CD14-positive monocyte (primary cell): ENCODE measurements at regions of chr16 and their contacts with region 1.

Region 1: DNA sequence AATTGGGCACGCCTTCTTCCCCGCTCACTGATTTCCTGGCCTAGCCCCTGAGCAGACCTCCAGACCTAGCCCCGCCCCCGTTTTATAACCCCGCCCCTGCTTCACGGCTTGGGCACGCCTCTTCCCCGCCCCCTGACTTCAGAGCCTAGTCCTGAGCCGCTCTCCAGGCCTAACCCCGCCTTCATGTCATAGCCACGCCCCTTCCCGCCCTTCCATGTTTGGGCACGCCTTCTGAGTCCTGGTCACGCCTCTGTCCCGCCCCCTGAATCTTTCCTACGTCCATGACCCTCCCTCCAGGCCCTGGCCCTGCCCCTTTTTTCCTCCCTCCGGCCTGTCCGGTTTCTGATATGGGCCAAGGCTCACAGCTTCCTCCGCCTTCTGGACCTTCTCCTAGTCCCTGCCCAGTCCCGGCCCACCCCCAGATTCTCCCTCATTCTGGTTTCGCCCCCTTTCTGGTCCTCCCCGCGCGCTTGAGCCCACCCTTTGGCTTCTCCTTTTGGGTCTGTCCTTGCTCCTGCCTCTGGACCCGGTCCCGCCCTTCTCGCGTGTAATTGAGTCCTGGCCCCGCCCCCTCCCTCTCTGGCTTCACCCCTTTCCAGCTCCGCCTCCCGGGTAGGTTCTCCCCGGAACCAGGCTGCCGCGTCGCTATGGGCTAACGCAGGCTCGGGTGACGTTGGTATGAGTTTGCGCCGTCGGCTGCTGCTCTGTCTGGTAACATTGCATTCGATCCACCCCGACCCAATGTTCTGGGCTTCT is 15.1 kb upstream of the EEF2K start:
- DNase-seq: peak; percentile 98 to 100 (median 100)
- H3K4me3 ChIP-seq: peak overlapping the region; percentile 45 to 82 (median 55)
- H3K4me3 Mint-ChIP-seq: peak overlapping the region; percentile 88 to 95
- H3K27ac ChIP-seq: peak overlapping the region; percentile 91 to 94
- H3K27ac Mint-ChIP-seq: peak overlapping the region; percentile 98 to 100 (median 100)
- H3K4me1 ChIP-seq: peaks cover 42 to 46% of the 10 kb centered on the region in 2 donors
- H3K4me1 Mint-ChIP-seq: peaks cover 40% of the 10 kb centered on the region
- H3K27me3 ChIP-seq: no peaks in the 10 kb centered on the region
- H3K27me3 Mint-ChIP-seq: peaks cover 6 to 10% (median 9%) of the 10 kb centered on the region in 3 donors
- CTCF ChIP-seq: no peak

Region 2: DNA sequence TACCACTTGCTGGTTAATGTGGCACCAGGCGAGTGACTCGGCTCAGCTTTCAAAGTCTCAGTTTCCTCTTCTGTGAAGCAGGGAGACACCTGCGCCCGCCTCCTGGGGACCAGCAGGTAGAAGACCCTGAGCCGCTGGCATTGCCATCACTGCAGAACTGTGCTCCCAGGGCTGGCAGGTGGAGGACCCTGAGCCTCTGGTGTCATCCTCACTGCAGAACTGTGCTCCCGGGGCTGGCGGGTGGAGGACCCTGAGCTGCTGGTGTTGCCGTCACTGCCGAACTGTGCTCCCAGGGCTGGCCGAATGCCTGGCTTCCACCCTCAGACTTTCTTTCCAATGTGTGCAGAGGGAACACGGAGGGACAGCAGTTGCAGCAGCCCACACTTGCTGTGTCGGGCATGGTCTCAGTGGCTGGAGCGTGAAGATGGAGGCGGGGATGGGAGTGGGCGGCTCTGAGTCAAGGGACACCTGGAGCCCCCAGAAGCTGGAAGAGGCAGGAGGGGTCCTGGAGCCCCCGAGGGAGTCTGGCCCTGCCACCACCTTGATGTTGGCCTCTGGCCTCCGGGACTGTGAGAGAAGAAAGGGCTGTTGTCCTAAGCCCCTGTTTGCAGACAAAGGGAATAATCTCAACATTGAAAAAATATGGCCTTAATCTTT is 667.4 kb before region 1 on chr16:
- intact Hi-C with region 1: loop called in 1 of 2 experiments (anchors 5 kb)
- DNase-seq: no peak
- H3K4me3 ChIP-seq: no peak overlapping the region
- H3K4me3 Mint-ChIP-seq: no peak overlapping the region
- H3K27ac ChIP-seq: no peak overlapping the region
- H3K27ac Mint-ChIP-seq: peak overlapping the region in 1 of 7 donors; percentile 15
- H3K4me1 ChIP-seq: peaks cover 16 to 17% of the 10 kb centered on the region in 2 donors
- H3K4me1 Mint-ChIP-seq: peaks cover 3% of the 10 kb centered on the region
- H3K27me3 ChIP-seq: no peaks in the 10 kb centered on the region
- H3K27me3 Mint-ChIP-seq: peaks cover 0 to 2% (median 0%) of the 10 kb centered on the region in 3 donors
- CTCF ChIP-seq: no peak

Region 3: GRCh38 chr16:21599233-21600030 is 591.5 kb before region 1 on chr16 and contains the start of gene METTL9:
- intact Hi-C with region 1: loop called in 1 of 2 experiments (anchors 10 kb)
- DNase-seq: peak; percentile 90 to 94 (median 91)
- H3K4me3 ChIP-seq: peak within 1 kb of the TSS; percentile 83 to 98 (median 88)
- H3K4me3 Mint-ChIP-seq: peak within 1 kb of the TSS; percentile 89 to 95
- H3K27ac ChIP-seq: peak within 1 kb of the TSS; percentile 96
- H3K27ac Mint-ChIP-seq: peak within 1 kb of the TSS; percentile 91 to 98 (median 96)
- H3K4me1 ChIP-seq: peaks cover 63 to 79% of the 10 kb centered on the region in 2 donors
- H3K4me1 Mint-ChIP-seq: peaks cover 61% of the 10 kb centered on the region
- H3K27me3 ChIP-seq: no peaks in the 10 kb centered on the region
- H3K27me3 Mint-ChIP-seq: no peaks in the 10 kb centered on the region
- CTCF ChIP-seq: no peak
- polyA plus RNA-seq, gene METTL9: 181 to 400 (median 373) TPM

Region 4: GRCh38 chr16:22001591-22001990 is 189.4 kb before region 1 on chr16:
- intact Hi-C with region 1: loop called (anchors 2 kb)
- DNase-seq: no peak
- H3K4me3 ChIP-seq: no peak overlapping the region
- H3K4me3 Mint-ChIP-seq: no peak overlapping the region
- H3K27ac ChIP-seq: no peak overlapping the region
- H3K27ac Mint-ChIP-seq: no peak overlapping the region
- H3K4me1 ChIP-seq: peaks cover 5 to 8% of the 10 kb centered on the region in 2 donors
- H3K4me1 Mint-ChIP-seq: peaks cover 14% of the 10 kb centered on the region
- H3K27me3 ChIP-seq: peaks cover 0 to 3% of the 10 kb centered on the region in 2 donors
- H3K27me3 Mint-ChIP-seq: peaks cover 0 to 17% (median 4%) of the 10 kb centered on the region in 3 donors
- CTCF ChIP-seq: no peak

Region 5: DNA sequence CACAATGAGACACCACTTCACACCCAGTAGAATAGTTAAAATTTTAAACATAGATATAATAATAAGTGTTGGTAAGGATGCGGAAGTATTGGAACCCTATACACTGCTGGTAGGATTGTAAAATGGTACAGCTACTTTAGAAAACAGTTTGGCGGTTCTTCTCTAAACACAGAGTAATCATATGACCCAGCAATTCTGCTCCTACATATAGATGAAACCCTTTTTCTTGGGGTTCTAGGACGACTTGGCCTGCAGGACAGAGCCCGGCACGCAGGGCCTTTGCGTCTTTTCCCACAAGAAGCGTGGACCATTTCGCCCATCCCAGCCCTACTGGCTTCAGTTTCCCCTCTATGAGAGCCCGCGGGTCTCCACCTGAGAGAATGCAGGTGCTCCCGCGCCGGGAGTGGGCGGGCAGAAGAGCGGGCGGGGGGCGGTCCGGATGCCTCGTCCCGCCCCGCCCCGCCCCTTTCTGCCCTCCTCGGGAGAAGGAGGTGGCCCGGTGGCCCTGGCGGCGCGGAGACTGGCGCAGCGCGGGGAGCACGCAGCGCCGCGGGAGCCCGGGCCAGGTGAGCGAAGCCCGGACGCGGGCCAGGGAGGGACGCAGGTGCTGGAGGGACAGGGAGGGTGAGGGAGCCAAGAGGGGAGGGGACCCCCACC is 28.8 kb before region 1 on chr16 and contains the start of gene SDR42E2:
- intact Hi-C with region 1: no loop called
- DNase-seq: no peak
- H3K4me3 ChIP-seq: peak within 1 kb of the TSS in 1 of 3 experiments; percentile 23
- H3K4me3 Mint-ChIP-seq: peak within 1 kb of the TSS in 1 of 2 donors; percentile 77
- H3K27ac ChIP-seq: no peak within 1 kb of the TSS
- H3K27ac Mint-ChIP-seq: no peak within 1 kb of the TSS
- H3K4me1 ChIP-seq: peaks cover 0 to 6% of the 10 kb centered on the region in 2 donors
- H3K4me1 Mint-ChIP-seq: peaks cover 2% of the 10 kb centered on the region
- H3K27me3 ChIP-seq: peaks cover 3 to 29% of the 10 kb centered on the region in 2 donors
- H3K27me3 Mint-ChIP-seq: peaks cover 28 to 42% (median 32%) of the 10 kb centered on the region in 3 donors
- CTCF ChIP-seq: no peak
- polyA plus RNA-seq, gene SDR42E2: 0.16 to 0.23 TPM in 2 of 3 donors, not detected in the other

Region 6: GRCh38 chr16:22206013-22206841 is 15.3 kb after region 1 on chr16 and contains the start of gene EEF2K:
- intact Hi-C with region 1: loop called in 1 of 2 experiments (anchors 2 kb)
- DNase-seq: peak; percentile 72 to 85 (median 76)
- H3K4me3 ChIP-seq: peak within 1 kb of the TSS; percentile 59 to 95 (median 66)
- H3K4me3 Mint-ChIP-seq: peak within 1 kb of the TSS; percentile 89 to 91
- H3K27ac ChIP-seq: peak within 1 kb of the TSS; percentile 34 to 74
- H3K27ac Mint-ChIP-seq: peak within 1 kb of the TSS; percentile 52 to 84 (median 75)
- H3K4me1 ChIP-seq: peaks cover 11 to 22% of the 10 kb centered on the region in 2 donors
- H3K4me1 Mint-ChIP-seq: peaks cover 19% of the 10 kb centered on the region
- H3K27me3 ChIP-seq: no peaks in the 10 kb centered on the region
- H3K27me3 Mint-ChIP-seq: peaks cover 0 to 4% (median 0%) of the 10 kb centered on the region in 3 donors
- CTCF ChIP-seq: peak; percentile 79
- polyA plus RNA-seq, gene EEF2K: 0.85 to 6.5 (median 1.7) TPM

Region 7: DNA sequence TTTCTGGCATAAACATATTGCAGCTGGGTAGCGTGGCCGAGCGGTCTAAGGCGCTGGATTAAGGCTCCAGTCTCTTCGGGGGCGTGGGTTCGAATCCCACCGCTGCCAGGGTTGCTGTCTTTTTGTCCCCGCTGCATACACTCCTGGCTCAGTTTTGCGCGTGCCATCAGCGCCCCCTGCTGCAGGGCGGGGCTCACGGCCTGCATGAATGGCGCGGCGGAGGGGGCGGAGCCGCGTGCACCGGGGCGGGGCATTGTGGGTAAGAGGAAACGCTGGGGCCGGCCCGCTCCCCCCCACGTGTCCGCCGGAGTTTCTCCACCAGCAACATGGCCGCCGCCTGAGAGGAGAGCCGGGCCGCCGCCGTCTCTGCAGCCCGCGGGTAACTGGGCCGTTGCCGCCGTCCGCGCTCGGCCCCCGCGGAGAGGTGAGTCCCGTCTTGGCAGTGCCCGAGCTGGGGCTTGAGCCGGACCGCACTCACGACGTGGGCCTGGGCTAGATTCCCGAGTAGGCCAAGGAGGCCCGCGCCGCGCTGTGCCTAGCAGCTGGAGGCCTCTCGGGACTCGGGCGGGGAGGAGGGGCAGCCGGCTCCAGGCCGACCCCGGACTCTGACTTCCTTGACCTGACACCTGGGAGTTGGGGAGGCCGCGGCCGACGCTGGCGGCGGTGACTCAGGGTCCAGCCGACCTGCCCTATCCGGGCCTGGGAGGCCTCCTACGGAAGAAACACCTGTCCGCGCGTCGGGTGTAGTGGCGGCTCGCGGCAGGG is 106.3 kb after region 1 on chr16 and contains the start of gene POLR3E:
- intact Hi-C with region 1: loop called (anchors 1 to 2 kb)
- DNase-seq: peak; percentile 97 to 99 (median 98)
- H3K4me3 ChIP-seq: peak within 1 kb of the TSS; percentile 74 to 95 (median 94)
- H3K4me3 Mint-ChIP-seq: peak within 1 kb of the TSS; percentile 85 to 92
- H3K27ac ChIP-seq: peak within 1 kb of the TSS; percentile 85 to 89
- H3K27ac Mint-ChIP-seq: peak within 1 kb of the TSS; percentile 86 to 96 (median 92)
- H3K4me1 ChIP-seq: peaks cover 20 to 25% of the 10 kb centered on the region in 2 donors
- H3K4me1 Mint-ChIP-seq: peaks cover 28% of the 10 kb centered on the region
- H3K27me3 ChIP-seq: no peaks in the 10 kb centered on the region
- H3K27me3 Mint-ChIP-seq: peaks cover 0 to 4% (median 2%) of the 10 kb centered on the region in 3 donors
- CTCF ChIP-seq: peak; percentile 88
- polyA plus RNA-seq, gene POLR3E: 4.1 to 34.6 (median 5.7) TPM

Region 8: GRCh38 chr16:22374311-22375116 is 183.6 kb after region 1 on chr16 and contains the start of gene CDR2:
- intact Hi-C with region 1: loop called (anchors 10 kb)
- DNase-seq: peak; percentile 92 to 95 (median 93)
- H3K4me3 ChIP-seq: peak within 1 kb of the TSS; percentile 56 to 87 (median 69)
- H3K4me3 Mint-ChIP-seq: peak within 1 kb of the TSS; percentile 96
- H3K27ac ChIP-seq: peak within 1 kb of the TSS in 1 of 2 donors; percentile 54
- H3K27ac Mint-ChIP-seq: peak within 1 kb of the TSS in 6 of 7 donors; percentile 32 to 85 (median 78)
- H3K4me1 ChIP-seq: peaks cover 33 to 54% of the 10 kb centered on the region in 2 donors
- H3K4me1 Mint-ChIP-seq: peaks cover 47% of the 10 kb centered on the region
- H3K27me3 ChIP-seq: no peaks in the 10 kb centered on the region
- H3K27me3 Mint-ChIP-seq: peaks cover 3 to 9% (median 3%) of the 10 kb centered on the region in 3 donors
- CTCF ChIP-seq: no peak
- polyA plus RNA-seq, gene CDR2: 2.5 to 5.9 (median 4.8) TPM

Region 9: DNA sequence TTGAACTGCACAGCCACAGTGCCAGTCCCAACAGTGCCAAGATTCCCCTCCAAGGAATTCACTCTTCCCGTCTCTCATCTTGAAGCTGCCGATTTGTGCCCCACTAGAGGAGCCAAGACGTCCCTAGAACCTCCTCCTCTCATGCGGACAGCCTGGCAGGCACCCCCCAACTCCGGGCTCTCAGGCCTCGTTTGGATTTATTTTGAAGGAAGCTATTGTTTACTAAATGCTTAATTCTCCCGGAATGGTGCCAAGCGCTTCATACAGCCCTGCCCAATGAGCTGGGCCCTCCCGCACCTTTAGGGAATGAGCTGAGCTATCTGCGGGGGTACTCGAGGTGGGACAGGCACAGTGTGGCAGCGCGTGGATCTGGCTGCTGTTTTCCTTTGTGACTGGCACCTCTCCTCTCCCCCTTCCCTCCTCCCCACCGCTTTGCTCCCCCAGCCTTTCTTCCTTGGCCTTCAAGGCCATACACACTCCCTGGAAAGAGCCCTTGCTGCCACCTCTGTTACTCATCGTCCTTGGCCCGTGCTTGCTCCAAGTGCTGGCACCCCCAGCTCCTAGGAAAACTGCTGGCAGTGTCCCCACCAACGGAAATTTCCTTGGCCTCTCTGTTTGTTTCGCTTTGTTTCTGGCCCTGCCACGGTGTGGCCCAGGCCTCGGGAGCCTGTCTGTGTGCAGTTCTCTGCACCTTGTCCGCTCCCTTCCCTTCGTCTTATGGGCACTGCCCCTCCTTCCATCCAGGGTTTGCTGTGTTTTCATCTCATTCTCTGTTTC is 233.4 kb after region 1 on chr16:
- intact Hi-C with region 1: no loop called
- DNase-seq: no peak
- H3K4me3 ChIP-seq: no peak overlapping the region
- H3K4me3 Mint-ChIP-seq: no peak overlapping the region
- H3K27ac ChIP-seq: no peak overlapping the region
- H3K27ac Mint-ChIP-seq: peak overlapping the region in 5 of 7 donors; percentile 12 to 59 (median 38)
- H3K4me1 ChIP-seq: no peaks in the 10 kb centered on the region
- H3K4me1 Mint-ChIP-seq: no peaks in the 10 kb centered on the region
- H3K27me3 ChIP-seq: no peaks in the 10 kb centered on the region
- H3K27me3 Mint-ChIP-seq: peaks cover 0 to 2% (median 2%) of the 10 kb centered on the region in 3 donors
- CTCF ChIP-seq: no peak

Region 10: GRCh38 chr16:23145608-23146007 is 954.7 kb after region 1 on chr16:
- intact Hi-C with region 1: no loop called
- DNase-seq: no peak
- H3K4me3 ChIP-seq: no peak overlapping the region
- H3K4me3 Mint-ChIP-seq: no peak overlapping the region
- H3K27ac ChIP-seq: no peak overlapping the region
- H3K27ac Mint-ChIP-seq: no peak overlapping the region
- H3K4me1 ChIP-seq: peaks cover 11 to 19% of the 10 kb centered on the region in 2 donors
- H3K4me1 Mint-ChIP-seq: peaks cover 25% of the 10 kb centered on the region
- H3K27me3 ChIP-seq: peaks cover 0 to 2% of the 10 kb centered on the region in 2 donors
- H3K27me3 Mint-ChIP-seq: peaks cover 3 to 6% (median 4%) of the 10 kb centered on the region in 3 donors
- CTCF ChIP-seq: no peak